ENCODE measurements at regions of chr7 and their contacts with region 1.

Region 1: DNA sequence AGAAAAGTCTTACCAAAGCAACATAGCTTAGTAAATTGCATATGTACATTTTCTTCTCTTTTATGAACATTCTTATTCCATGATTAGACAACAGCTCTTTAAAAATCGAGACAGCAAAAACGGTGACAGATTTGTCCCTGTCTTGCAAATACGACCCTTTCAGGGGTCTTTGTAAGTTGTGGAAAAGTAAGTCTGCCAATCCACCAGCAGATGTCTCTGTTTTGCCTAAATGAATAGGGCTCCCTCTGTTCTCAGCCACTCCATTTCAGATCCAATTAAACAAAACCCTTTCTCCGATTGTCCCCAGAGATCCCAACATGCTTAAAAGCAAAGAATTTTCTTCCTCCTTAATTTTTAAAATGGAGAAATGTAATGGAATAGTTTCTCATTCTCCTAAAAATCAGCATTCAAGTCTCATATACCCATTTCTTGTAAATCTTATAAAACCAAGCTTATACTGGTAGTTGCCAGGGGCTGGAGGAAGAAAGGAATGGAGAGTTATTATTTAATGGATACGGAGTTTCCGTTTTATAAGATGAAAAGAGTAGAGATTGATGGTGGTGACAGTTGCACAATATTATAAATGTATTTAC is 61.0 kb upstream of the NFE2L3 start:
- DNase-seq: peak; percentile 64
- CTCF ChIP-seq: peak; percentile 50

Region 2: DNA sequence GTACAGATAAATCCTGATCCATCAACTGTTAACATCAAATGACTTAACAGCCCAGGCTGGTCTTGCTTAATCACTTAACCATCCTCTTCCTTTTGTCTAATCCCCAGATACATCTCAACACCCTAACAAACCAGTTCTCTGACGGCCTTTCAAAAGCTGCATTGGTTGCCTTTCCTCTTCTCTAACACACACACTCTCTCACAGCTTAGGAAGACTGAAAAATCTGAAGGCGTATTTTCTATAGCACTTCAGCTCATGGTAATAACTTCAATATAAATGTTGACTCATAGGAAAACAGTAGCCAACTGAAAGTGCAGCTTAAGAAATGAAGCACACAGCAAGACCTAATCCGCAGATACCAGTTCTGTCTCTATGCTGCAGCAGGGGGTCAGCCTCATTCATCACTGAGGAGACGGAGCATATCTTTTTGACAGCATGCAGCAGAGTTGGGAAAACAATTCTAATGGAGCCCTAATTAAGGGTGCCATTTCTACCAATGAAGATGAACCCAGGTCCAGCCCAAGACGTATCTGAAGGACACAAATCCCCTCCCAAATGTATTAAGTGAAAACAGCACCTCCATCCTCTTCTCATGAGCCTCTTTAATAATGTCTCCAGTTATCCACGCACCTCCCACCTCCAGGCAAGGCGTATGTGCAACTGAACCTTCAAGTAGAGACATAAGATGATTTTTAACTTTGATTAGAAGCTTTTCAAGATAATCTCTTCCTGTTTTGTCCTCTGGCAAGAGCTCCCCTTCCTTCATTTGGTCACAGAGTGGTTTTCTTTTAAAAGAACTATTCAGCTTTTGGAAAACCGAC is 150.7 kb before region 1 on chr7:
- in situ Hi-C with region 1: no loop called
- DNase-seq: no peak
- CTCF ChIP-seq: no peak

Region 3: DNA sequence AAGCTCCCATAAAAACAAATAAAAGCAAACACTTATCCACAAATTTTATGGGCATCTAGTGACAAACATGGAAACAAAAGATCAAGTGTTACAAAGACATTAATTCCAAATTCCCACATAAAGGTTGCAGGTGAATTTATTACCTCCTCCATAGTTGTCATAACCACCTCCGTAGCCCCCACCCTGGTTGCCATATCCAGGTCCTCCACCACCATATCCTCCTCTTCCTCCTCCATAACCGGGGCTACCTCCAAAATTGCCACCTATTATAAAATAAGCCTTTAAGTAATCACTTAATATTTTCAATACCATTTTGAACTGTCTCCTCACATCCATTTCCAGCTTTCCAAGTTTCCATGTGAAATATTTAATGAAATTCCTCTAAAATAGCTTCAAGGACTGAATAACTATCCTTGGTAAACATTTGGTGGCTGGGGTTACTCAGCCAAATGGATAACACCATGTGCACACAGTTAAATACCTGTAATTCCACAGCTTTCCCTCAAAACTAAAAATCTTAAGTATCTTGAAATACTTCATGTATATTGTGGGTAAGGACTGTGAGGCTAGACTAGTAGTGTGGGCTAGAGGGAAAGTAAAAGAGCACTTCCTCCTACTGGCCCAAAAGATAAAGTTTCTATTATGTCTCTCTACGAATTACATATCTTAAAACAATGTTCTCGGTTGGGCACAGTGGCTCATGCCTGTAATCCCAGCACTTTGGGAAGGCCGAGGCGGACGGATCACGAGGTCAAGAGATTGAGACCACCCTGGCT is 102.6 kb after region 1 on chr7:
- in situ Hi-C with region 1: loop called (anchors 5 kb)
- DNase-seq: no peak
- CTCF ChIP-seq: no peak

Region 4: GRCh38 chr7:26307226-26307625 is 216.2 kb after region 1 on chr7:
- in situ Hi-C with region 1: no loop called
- DNase-seq: no peak
- CTCF ChIP-seq: no peak

Measured in GM13976 (cell line).